ENCODE measurements at regions of chr5 and their contacts with region 1.

Region 1: GRCh38 chr5:98768160-98769005 is 5.1 kb upstream of the RGMB start:
- DNase-seq: no peak

Region 2: GRCh38 chr5:98454904-98455303 is 313.5 kb before region 1 on chr5:
- intact Hi-C with region 1: loop called (anchors 2 kb)
- DNase-seq: no peak

Region 3: GRCh38 chr5:98872674-98873073 is 104.3 kb after region 1 on chr5:
- intact Hi-C with region 1: no loop called
- DNase-seq: no peak